Activated CD4-positive, alpha-beta memory T cell treated with anti-CD3 and anti-CD28 coated beads, Interleukin-2, amount 10 ng/mL, durations not matched to agents 7 days and 5 days (primary cell): ENCODE measurements at regions of chr17 and their contacts with region 1.

Region 1: GRCh38 chr17:49369089-49369488 is 7.0 kb upstream of the ZNF652 start:
- DNase-seq: no peak
- H3K4me3 Mint-ChIP-seq: no peak overlapping the region
- H3K27ac Mint-ChIP-seq: no peak overlapping the region
- H3K4me1 Mint-ChIP-seq: peaks cover 27% of the 10 kb centered on the region
- H3K27me3 Mint-ChIP-seq: no peaks in the 10 kb centered on the region

Region 2: DNA sequence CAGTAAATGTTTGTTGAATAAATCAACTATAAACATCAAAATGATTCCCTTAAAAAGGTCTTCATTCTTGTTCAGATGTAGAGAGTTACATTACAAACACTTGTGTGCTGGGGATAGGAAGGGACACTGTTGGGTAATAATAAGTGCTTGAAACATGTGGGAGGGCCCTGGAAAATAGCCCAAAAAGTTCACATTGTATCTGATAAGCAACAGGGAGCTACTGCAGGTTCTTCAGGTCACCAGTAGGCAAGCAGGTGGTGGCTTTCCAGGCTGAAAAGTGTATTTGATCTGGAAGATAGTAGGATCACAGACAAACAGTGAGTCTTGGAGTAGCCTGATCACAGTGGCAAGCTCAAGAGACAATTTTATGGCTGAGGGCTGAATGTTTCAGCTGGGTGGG is 12.0 kb after region 1 on chr17:
- CTCF ChIA-PET with region 1: interaction called, 19 read pairs
- POLR2A ChIA-PET with region 1: interaction called, 71 read pairs
- DNase-seq: no peak
- H3K4me3 Mint-ChIP-seq: no peak overlapping the region
- H3K27ac Mint-ChIP-seq: no peak overlapping the region
- H3K4me1 Mint-ChIP-seq: peaks cover 11% of the 10 kb centered on the region
- H3K27me3 Mint-ChIP-seq: peaks cover 9% of the 10 kb centered on the region

Region 3: DNA sequence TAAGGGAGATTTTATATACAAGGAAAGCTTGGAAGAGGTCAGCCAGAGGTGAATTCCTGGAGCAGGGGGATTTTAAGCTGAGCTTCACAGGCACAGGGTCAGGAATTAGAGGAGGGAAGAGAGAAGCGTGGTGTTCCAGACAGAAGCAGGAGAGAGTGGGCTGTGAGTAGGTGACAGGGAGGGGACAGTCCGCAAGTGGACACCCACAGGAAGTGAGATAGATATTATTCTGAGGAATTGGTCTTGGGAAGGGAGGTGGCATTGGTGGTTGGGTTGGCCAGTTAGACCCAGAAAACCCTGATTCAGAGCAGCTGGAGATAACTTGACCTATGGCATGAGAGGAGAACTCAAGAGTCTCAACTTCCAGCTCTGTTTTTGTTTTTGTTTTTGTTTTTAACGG is 30.9 kb after region 1 on chr17:
- CTCF ChIA-PET with region 1: interaction called, 16 read pairs
- POLR2A ChIA-PET with region 1: no interaction called
- DNase-seq: no peak
- H3K4me3 Mint-ChIP-seq: no peak overlapping the region
- H3K27ac Mint-ChIP-seq: no peak overlapping the region
- H3K4me1 Mint-ChIP-seq: peaks cover 14% of the 10 kb centered on the region
- H3K27me3 Mint-ChIP-seq: no peaks in the 10 kb centered on the region

Region 4: DNA sequence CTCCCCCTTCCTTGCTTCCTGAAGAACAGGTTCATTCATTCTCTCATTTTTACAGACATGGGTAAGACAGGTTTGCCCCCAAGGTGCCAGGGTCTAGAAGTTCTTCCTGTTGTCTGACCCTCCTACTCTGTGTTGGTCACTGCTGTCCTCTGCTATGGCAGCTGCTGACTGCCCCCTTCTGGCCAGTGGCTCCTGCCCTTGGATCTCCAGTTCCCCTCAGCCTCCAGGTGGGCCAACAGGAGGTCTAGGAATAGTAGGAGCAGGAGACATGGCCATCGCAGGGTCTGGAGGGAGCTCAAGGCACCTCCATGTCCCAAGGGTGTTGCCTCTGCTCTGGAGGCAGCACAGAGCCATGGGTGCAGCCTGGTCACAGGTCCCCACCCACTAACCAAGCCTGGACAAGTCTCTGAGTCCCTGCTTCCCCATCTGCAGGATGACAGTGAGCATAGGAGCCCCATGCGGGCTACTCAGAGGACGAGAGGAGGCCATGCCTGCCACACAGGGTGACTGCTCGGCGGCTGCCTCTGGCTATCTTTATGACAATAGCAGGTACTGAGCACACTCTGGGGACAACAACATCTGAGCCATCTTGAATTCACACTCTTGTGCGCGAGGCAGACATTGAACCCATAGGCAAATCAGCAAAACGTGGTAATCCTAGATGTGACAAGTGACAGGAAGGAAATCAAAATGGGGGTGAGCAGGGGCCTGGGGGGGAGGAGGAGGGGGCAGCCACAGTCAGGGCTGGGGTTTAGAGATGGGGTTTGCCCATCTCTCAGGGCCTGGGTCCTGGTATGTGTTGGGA is 179.6 kb after region 1 on chr17:
- CTCF ChIA-PET with region 1: no interaction called
- POLR2A ChIA-PET with region 1: no interaction called
- DNase-seq: no peak
- H3K4me3 Mint-ChIP-seq: no peak overlapping the region
- H3K27ac Mint-ChIP-seq: no peak overlapping the region
- H3K4me1 Mint-ChIP-seq: no peaks in the 10 kb centered on the region
- H3K27me3 Mint-ChIP-seq: no peaks in the 10 kb centered on the region